ENCODE measurements at regions of chr14 and their contacts with region 1.

Region 1: GRCh38 chr14:68961781-68962584 is 17.1 kb downstream of the ACTN1 start:
- DNase-seq: peak; percentile 67
- H3K4me3 Mint-ChIP-seq: no peak overlapping the region
- H3K27ac Mint-ChIP-seq: peak overlapping the region; percentile 25
- H3K4me1 Mint-ChIP-seq: peaks cover 68% of the 10 kb centered on the region
- H3K27me3 Mint-ChIP-seq: no peaks in the 10 kb centered on the region
- CTCF ChIP-seq: no peak

Region 2: DNA sequence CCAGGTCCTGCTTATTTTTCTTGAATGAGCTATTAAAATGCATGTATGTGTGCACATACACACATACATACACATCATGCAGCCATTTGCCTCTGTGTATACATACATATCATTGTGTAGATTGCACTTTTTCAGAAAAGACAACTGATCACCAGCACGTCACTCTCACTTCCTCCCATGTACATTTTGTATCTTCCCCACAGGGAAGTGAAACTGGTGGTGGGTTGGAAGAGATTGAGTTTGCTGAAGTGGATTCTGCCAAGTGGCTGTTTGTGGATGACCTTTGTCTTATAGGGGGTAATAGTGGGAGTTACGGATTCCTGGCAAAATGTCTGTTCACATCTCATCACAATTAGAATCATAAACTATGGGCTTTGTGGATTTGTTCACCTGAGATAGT is 693.8 kb before region 1 on chr14:
- CTCF ChIA-PET with region 1: no interaction called
- intact Hi-C with region 1: no loop called
- DNase-seq: no peak
- H3K4me3 Mint-ChIP-seq: no peak overlapping the region
- H3K27ac Mint-ChIP-seq: no peak overlapping the region
- H3K4me1 Mint-ChIP-seq: peaks cover 32% of the 10 kb centered on the region
- H3K27me3 Mint-ChIP-seq: no peaks in the 10 kb centered on the region
- CTCF ChIP-seq: no peak

Region 3: GRCh38 chr14:68862954-68863594 is 98.9 kb before region 1 on chr14:
- CTCF ChIA-PET with region 1: no interaction called
- intact Hi-C with region 1: no loop called
- DNase-seq: peak; percentile 82
- H3K4me3 Mint-ChIP-seq: no peak overlapping the region
- H3K27ac Mint-ChIP-seq: no peak overlapping the region
- H3K4me1 Mint-ChIP-seq: no peaks in the 10 kb centered on the region
- H3K27me3 Mint-ChIP-seq: no peaks in the 10 kb centered on the region
- CTCF ChIP-seq: peak; percentile 81

Region 4: GRCh38 chr14:68911594-68912227 is 50.3 kb before region 1 on chr14:
- CTCF ChIA-PET with region 1: no interaction called
- intact Hi-C with region 1: no loop called
- DNase-seq: peak; percentile 79
- H3K4me3 Mint-ChIP-seq: no peak overlapping the region
- H3K27ac Mint-ChIP-seq: peak overlapping the region; percentile 67
- H3K4me1 Mint-ChIP-seq: no peaks in the 10 kb centered on the region
- H3K27me3 Mint-ChIP-seq: no peaks in the 10 kb centered on the region
- CTCF ChIP-seq: peak; percentile 93

Region 5: GRCh38 chr14:68979021-68979782 is 17.2 kb after region 1 on chr14 and contains the start of gene ACTN1:
- CTCF ChIA-PET with region 1: interaction called, 5 read pairs
- intact Hi-C with region 1: loop called (anchors 2 kb)
- DNase-seq: peak; percentile 95
- H3K4me3 Mint-ChIP-seq: peak within 1 kb of the TSS; percentile 79
- H3K27ac Mint-ChIP-seq: peak within 1 kb of the TSS; percentile 71
- H3K4me1 Mint-ChIP-seq: peaks cover 54% of the 10 kb centered on the region
- H3K27me3 Mint-ChIP-seq: no peaks in the 10 kb centered on the region
- CTCF ChIP-seq: no peak
- total RNA-seq, gene ACTN1: 246 and 326 TPM in 2 replicates

Measured in Calu3 (cell line).